ENCODE measurements at regions of chr11 and their contacts with region 1.

Region 1: GRCh38 chr11:60504219-60504905 is 10.8 kb upstream of the MS4A13 start:
- DNase-seq: no peak
- ATAC-seq: no peak
- H3K4me3 ChIP-seq: no peak overlapping the region
- H3K4me3 Mint-ChIP-seq: no peak overlapping the region
- H3K27ac ChIP-seq: no peak overlapping the region
- H3K27ac Mint-ChIP-seq: no peak overlapping the region
- H3K4me1 ChIP-seq: peaks cover 4 to 10% of the 10 kb centered on the region in 2 donors
- H3K4me1 Mint-ChIP-seq: peaks cover 5% of the 10 kb centered on the region
- H3K27me3 ChIP-seq: no peaks in the 10 kb centered on the region
- H3K27me3 Mint-ChIP-seq: peaks cover 11% of the 10 kb centered on the region
- CTCF ChIP-seq: no peak

Region 2: GRCh38 chr11:60433386-60433785 is 71.0 kb before region 1 on chr11:
- CTCF ChIA-PET with region 1: no interaction called
- POLR2A ChIA-PET with region 1: no interaction called
- intact Hi-C with region 1: no loop called
- DNase-seq: no peak
- ATAC-seq: no peak
- H3K4me3 ChIP-seq: no peak overlapping the region
- H3K4me3 Mint-ChIP-seq: no peak overlapping the region
- H3K27ac ChIP-seq: no peak overlapping the region
- H3K27ac Mint-ChIP-seq: no peak overlapping the region
- H3K4me1 ChIP-seq: no peaks in the 10 kb centered on the region
- H3K4me1 Mint-ChIP-seq: peaks cover 19% of the 10 kb centered on the region
- H3K27me3 ChIP-seq: no peaks in the 10 kb centered on the region
- H3K27me3 Mint-ChIP-seq: no peaks in the 10 kb centered on the region
- CTCF ChIP-seq: no peak

Region 3: DNA sequence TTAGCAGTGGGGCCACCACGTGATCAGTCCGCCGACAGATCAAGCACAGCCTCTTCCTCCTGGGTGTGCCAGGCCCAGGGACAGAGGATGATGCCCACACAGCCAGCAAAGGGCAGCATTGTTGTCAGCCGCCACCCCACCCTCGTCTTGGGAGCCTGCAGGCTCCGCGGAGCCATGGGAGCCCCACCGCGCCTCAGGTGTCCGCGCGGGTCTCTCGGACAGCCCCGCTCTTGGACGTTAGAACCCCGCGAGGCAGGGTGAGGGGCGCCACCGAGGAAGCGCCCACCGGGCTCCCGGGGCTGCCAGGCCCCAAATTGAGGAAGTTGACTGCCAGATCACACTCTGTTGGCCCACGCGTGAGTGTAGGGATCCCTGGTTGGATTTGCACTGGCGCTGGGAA is 111.1 kb after region 1 on chr11:
- CTCF ChIA-PET with region 1: interaction called, 11 read pairs
- POLR2A ChIA-PET with region 1: no interaction called
- intact Hi-C with region 1: no loop called
- DNase-seq: no peak
- ATAC-seq: no peak
- H3K4me3 ChIP-seq: no peak overlapping the region
- H3K4me3 Mint-ChIP-seq: no peak overlapping the region
- H3K27ac ChIP-seq: no peak overlapping the region
- H3K27ac Mint-ChIP-seq: no peak overlapping the region
- H3K4me1 ChIP-seq: peaks cover 0 to 7% of the 10 kb centered on the region in 2 donors
- H3K4me1 Mint-ChIP-seq: peaks cover 7% of the 10 kb centered on the region
- H3K27me3 ChIP-seq: no peaks in the 10 kb centered on the region
- H3K27me3 Mint-ChIP-seq: peaks cover 8% of the 10 kb centered on the region
- CTCF ChIP-seq: no peak